MCF 10A (cell line): ENCODE measurements at regions of chr16 and their contacts with region 1.

Region 1: DNA sequence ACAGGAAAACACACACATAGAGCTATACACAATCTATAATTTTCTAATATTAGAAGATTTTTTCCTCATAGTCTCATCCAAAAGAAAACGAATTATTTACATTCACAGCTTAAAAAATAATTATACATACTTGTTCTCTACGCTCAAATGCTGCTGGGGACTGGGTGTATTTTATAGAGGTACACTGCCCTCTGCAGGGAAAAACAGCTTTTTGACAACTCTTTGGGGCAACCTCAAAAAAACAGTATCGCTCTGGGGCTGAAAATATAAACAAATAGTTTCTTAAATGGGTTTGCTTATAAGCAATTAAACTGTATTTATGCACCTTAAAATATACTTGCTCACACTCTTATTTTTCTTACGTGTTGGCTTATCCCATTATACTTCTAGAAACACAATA is 261.8 kb upstream of the PSMD7 start:
- DNase-seq: peak; percentile 39
- H3K4me3 Mint-ChIP-seq: no peak overlapping the region
- H3K27ac Mint-ChIP-seq: no peak overlapping the region
- H3K4me1 Mint-ChIP-seq: no peaks in the 10 kb centered on the region
- H3K27me3 Mint-ChIP-seq: peaks cover 95% of the 10 kb centered on the region
- CTCF ChIP-seq: peak; percentile 38

Region 2: GRCh38 chr16:73565262-73565661 is 469.6 kb before region 1 on chr16:
- CTCF ChIA-PET with region 1: interaction called, 3 read pairs
- POLR2A ChIA-PET with region 1: no interaction called
- intact Hi-C with region 1: loop called (anchors 1 kb)
- DNase-seq: peak; percentile 43
- H3K4me3 Mint-ChIP-seq: no peak overlapping the region
- H3K27ac Mint-ChIP-seq: no peak overlapping the region
- H3K4me1 Mint-ChIP-seq: no peaks in the 10 kb centered on the region
- H3K27me3 Mint-ChIP-seq: peaks cover 94% of the 10 kb centered on the region
- CTCF ChIP-seq: peak; percentile 43

Region 3: GRCh38 chr16:73973174-73973573 is 61.7 kb before region 1 on chr16:
- CTCF ChIA-PET with region 1: no interaction called
- POLR2A ChIA-PET with region 1: no interaction called
- intact Hi-C with region 1: no loop called
- DNase-seq: no peak
- H3K4me3 Mint-ChIP-seq: no peak overlapping the region
- H3K27ac Mint-ChIP-seq: no peak overlapping the region
- H3K4me1 Mint-ChIP-seq: no peaks in the 10 kb centered on the region
- H3K27me3 Mint-ChIP-seq: peaks cover 81% of the 10 kb centered on the region
- CTCF ChIP-seq: no peak

Region 4: GRCh38 chr16:74226338-74226954 is 191.6 kb after region 1 on chr16:
- CTCF ChIA-PET with region 1: interaction called, 12 read pairs
- POLR2A ChIA-PET with region 1: no interaction called
- intact Hi-C with region 1: no loop called
- DNase-seq: peak; percentile 14
- H3K4me3 Mint-ChIP-seq: no peak overlapping the region
- H3K27ac Mint-ChIP-seq: no peak overlapping the region
- H3K4me1 Mint-ChIP-seq: no peaks in the 10 kb centered on the region
- H3K27me3 Mint-ChIP-seq: peaks cover 49% of the 10 kb centered on the region
- CTCF ChIP-seq: peak; percentile 54